ENCODE measurements at regions of chr12 and their contacts with region 1.

Region 1: DNA sequence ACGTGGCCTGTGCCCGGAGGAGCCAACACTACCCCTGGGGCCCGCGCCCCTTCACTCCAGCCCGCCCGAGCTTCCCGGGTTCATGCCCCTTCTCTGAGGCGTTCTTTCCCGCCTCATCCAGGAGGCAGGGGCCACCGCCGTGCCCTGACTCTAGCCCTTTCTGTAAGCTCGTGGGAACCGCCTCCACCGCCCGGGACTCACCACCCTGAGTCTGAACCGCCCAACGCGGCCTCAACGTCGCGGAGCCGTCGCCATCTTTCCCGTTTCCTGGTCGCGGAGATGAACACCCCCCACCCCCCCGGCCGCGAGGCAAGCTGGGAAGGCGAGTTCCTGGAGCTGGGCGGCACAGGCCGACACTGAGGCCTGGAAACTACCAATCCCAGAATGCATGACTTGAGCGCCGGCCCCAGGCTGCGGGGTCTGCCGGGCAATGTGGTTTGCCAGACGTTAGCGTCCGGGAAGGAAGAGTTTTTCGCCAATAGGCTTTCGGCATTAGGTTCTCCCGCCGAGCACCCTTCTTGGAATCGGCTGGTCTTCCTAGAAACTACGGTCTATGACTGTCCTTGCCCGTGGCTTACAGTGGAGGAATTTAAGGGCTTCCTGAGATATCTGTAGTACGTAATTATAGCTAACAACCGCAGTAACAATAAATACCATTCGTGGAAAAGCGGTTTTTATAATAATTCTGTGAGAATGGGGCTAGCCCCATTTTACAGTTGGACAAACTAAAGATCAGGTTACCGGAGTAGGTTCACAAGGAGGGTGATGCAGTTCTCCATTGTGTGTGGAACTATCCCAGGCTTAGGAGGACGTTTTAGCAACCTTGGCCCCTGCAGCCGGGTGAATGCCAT is at the start of gene DDX23:
- DNase-seq: peak; percentile 97
- ATAC-seq: peak; percentile 99
- total RNA-seq, gene DDX23: 37.2 TPM

Region 2: DNA sequence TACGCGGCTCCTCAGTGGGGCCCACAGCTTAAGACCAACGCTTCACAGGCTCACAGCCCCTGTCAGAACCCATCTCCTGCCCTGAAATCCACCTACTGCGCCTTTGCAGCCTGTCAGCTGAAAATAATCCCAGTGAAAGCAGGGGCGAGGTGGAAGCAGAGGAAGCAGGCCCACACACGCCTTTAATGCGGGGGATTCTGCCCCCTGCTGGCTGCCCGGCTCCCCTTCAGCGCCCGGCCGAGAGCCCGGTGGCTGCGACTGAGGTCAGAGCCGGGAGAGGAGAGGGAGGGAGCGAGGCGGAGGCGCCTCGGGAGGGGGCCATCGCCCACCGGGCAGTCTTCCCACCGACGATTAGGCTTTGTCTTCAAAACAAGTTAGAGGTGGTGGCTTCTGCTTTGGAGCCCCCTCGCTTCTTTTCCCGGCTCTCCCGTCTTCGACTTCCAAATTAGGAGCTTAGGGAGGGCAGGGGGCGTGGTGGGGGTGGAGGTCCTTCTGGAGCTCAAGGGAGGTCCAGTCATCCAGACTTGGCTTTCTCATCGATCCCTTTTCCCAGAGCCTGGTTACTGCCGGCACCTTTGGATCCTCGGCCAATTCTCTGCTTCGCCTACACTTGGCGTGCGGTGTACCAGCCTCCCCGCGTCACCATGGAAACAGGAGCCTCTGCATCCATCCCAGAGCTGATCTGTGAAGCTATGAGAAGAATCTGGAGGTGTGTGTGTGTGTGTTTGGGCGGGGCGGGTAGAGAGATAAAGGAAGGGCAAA is 38.7 kb after region 1 on chr12:
- intact Hi-C with region 1: loop called (anchors 1 kb)
- DNase-seq: peak; percentile 85
- ATAC-seq: peak; percentile 95

Region 3: GRCh38 chr12:48936379-48936979 is 84.4 kb after region 1 on chr12:
- intact Hi-C with region 1: loop called (anchors 2 kb)
- DNase-seq: peak; percentile 71
- ATAC-seq: peak; percentile 67

Region 4: GRCh38 chr12:48995061-48995879 is 143.2 kb after region 1 on chr12:
- intact Hi-C with region 1: loop called (anchors 5 kb)
- DNase-seq: peak; percentile 90
- ATAC-seq: peak; percentile 83

Measured in Right ventricle myocardium inferior (tissue), 1 donor.